ENCODE measurements at regions of chr10 and their contacts with region 1.

Region 1: GRCh38 chr10:1420661-1421362 is 316.5 kb downstream of the ADARB2 start:
- DNase-seq: no peak
- ATAC-seq: peak; percentile 96
- H3K4me3 ChIP-seq: peak overlapping the region; percentile 24; the same call in 1 of the 2 replicates
- H3K27ac ChIP-seq: no peak overlapping the region
- H3K4me1 ChIP-seq: peaks cover 6% of the 10 kb centered on the region
- H3K27me3 ChIP-seq: no peaks in the 10 kb centered on the region
- CTCF ChIP-seq: peak; percentile 86 to 93 (median 89)
- EP300 ChIP-seq: no peak
- POLR2A ChIP-seq: no peak
- RAD21 ChIP-seq: peak; percentile 89

Region 2: GRCh38 chr10:1483826-1484225 is 63.0 kb after region 1 on chr10:
- CTCF ChIA-PET with region 1: interaction called, 12 read pairs
- POLR2A ChIA-PET with region 1: no interaction called
- RAD21 ChIA-PET with region 1: interaction called, 3 read pairs
- SMC1A ChIA-PET with region 1: interaction called, 3 read pairs
- in situ Hi-C with region 1: no loop called
- intact Hi-C with region 1: no loop called
- DNase-seq: no peak
- ATAC-seq: no peak
- H3K4me3 ChIP-seq: no peak overlapping the region
- H3K27ac ChIP-seq: no peak overlapping the region
- H3K4me1 ChIP-seq: peaks cover 6% of the 10 kb centered on the region
- H3K27me3 ChIP-seq: no peaks in the 10 kb centered on the region
- CTCF ChIP-seq: no peak
- EP300 ChIP-seq: no peak
- POLR2A ChIP-seq: no peak
- RAD21 ChIP-seq: no peak

Region 3: DNA sequence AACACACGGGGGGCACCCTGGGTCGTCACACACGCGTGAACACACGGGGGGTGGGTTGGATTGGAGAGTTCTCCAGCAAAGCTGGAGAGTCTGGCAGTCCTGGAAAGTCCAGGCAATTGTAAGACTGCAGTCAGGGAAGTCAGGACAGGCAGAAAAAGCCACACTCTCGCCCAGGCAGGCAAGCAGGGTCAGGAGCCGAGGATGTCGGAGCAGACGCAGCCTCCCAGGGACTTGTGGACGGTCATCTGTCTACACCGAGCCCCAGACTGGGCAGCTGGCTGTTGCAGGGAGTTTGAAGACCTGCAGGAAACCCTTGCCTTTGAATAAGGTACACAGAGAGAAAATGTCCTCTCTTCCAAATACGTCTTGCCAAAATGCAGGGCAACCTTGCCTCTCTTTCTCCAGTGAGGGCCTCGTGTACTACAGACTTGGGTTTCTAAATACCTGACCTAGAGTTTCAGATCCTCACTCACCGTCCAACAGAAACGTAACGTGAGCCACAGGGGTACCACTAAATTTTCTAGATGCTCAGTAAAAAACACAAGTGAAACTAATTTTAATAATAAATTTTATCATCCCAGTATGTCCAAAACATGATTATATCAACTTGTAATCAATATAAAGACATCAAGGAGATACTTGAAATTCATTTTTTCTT is 139.9 kb after region 1 on chr10:
- CTCF ChIA-PET with region 1: interaction called, 3 read pairs
- POLR2A ChIA-PET with region 1: no interaction called
- RAD21 ChIA-PET with region 1: no interaction called
- SMC1A ChIA-PET with region 1: no interaction called
- in situ Hi-C with region 1: no loop called
- intact Hi-C with region 1: loop called (anchors 10 kb)
- DNase-seq: no peak
- ATAC-seq: peak; percentile 50; the same call in 2 of the 3 replicates
- H3K4me3 ChIP-seq: no peak overlapping the region
- H3K27ac ChIP-seq: no peak overlapping the region
- H3K4me1 ChIP-seq: peaks cover 4% of the 10 kb centered on the region; the same call in 1 of the 2 replicates
- H3K27me3 ChIP-seq: no peaks in the 10 kb centered on the region
- CTCF ChIP-seq: no peak
- EP300 ChIP-seq: no peak
- POLR2A ChIP-seq: no peak
- RAD21 ChIP-seq: no peak

Region 4: DNA sequence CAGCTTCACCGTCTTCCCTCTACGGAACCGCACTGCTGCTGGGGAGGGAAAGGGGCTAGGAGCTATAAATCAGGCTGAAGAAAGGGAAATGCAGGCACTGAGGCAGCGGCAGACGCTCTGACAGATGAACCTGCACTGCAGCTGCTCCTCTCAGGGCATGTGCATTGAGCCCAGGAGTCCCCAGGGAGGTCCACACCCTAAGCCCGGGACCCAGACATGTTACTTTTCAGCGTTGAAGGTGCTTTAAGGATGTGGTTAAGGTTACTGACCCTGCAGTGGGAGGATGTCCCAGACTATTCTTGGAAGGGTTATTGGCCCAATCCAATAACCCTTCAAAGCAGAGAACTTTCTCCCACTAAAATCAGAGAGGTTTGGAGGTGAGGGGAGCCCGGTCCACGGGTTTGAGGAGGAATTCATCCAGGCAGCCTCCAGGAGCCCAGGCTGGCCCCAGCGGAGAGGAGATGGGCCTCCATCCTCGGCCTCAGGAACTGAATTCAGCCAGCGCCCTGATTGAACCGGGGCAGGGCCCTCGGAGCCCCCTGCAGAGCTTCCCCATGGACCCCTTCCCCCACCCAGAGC is 241.1 kb after region 1 on chr10:
- CTCF ChIA-PET with region 1: interaction called, 7 read pairs
- POLR2A ChIA-PET with region 1: no interaction called
- RAD21 ChIA-PET with region 1: interaction called, 3 read pairs
- SMC1A ChIA-PET with region 1: no interaction called
- in situ Hi-C with region 1: no loop called
- intact Hi-C with region 1: loop called (anchors 10 kb)
- DNase-seq: peak; percentile 34
- ATAC-seq: peak; percentile 83
- H3K4me3 ChIP-seq: no peak overlapping the region
- H3K27ac ChIP-seq: peak overlapping the region; percentile 33
- H3K4me1 ChIP-seq: peaks cover 15% of the 10 kb centered on the region
- H3K27me3 ChIP-seq: no peaks in the 10 kb centered on the region
- CTCF ChIP-seq: no peak
- EP300 ChIP-seq: no peak
- POLR2A ChIP-seq: no peak
- RAD21 ChIP-seq: no peak

Measured in GM12878 (cell line).